Activated CD4-positive, alpha-beta T cell treated with anti-CD3 and anti-CD28 coated beads for 36 hours (primary cell): ENCODE measurements at regions of chr1 and their contacts with region 1.

Region 1: DNA sequence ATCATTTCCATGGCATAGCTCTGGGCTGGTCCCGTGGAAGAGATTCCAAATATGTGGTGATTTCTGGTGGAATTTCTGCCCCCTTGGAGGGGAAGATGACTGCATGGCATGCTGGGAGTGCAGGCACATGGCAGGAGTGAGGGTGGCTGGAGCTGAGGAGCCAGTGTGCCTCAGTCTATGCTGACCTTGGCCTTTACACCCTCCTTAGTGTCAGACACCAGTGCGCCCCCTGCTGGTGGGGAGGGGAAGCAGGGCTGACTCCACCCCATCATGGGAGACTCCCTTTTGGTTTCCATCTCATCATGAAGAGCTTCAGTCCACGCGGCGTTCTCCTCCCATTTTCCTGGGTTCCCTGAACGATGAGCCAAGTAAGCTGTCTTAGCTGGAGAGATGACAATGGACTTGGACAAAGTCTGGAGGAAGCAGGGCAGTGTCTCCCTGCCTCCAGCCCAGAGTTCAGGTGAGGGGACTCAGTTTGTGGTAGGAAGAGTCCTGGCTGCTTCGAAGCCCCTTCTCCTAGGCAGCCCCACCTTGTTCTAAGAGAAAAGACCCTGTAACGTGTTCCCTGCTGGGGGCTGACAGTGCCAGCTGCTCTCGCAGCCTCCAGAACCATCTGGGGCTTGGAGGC is 10.3 kb downstream of the ALX3 start:
- DNase-seq: peak; percentile 89
- ATAC-seq: peak; percentile 94
- H3K4me3 Mint-ChIP-seq: no peak overlapping the region
- H3K27ac Mint-ChIP-seq: no peak overlapping the region
- H3K4me1 Mint-ChIP-seq: no peaks in the 10 kb centered on the region
- H3K27me3 Mint-ChIP-seq: no peaks in the 10 kb centered on the region

Region 2: GRCh38 chr1:110040548-110040947 is 19.6 kb before region 1 on chr1:
- CTCF ChIA-PET with region 1: interaction called, 19 read pairs
- POLR2A ChIA-PET with region 1: interaction called, 3 read pairs
- intact Hi-C with region 1: no loop called
- DNase-seq: peak; percentile 69
- ATAC-seq: peak; percentile 94
- H3K4me3 Mint-ChIP-seq: no peak overlapping the region
- H3K27ac Mint-ChIP-seq: peak overlapping the region; percentile 35
- H3K4me1 Mint-ChIP-seq: peaks cover 23% of the 10 kb centered on the region
- H3K27me3 Mint-ChIP-seq: no peaks in the 10 kb centered on the region

Region 3: GRCh38 chr1:110082477-110082876 is 22.3 kb after region 1 on chr1:
- CTCF ChIA-PET with region 1: interaction called, 19 read pairs
- POLR2A ChIA-PET with region 1: interaction called, 7 read pairs
- intact Hi-C with region 1: no loop called
- DNase-seq: no peak
- ATAC-seq: no peak
- H3K4me3 Mint-ChIP-seq: no peak overlapping the region
- H3K27ac Mint-ChIP-seq: no peak overlapping the region
- H3K4me1 Mint-ChIP-seq: peaks cover 13% of the 10 kb centered on the region
- H3K27me3 Mint-ChIP-seq: peaks cover 58% of the 10 kb centered on the region